B cell (primary cell): ENCODE measurements at regions of chr11 and their contacts with region 1.

Region 1: DNA sequence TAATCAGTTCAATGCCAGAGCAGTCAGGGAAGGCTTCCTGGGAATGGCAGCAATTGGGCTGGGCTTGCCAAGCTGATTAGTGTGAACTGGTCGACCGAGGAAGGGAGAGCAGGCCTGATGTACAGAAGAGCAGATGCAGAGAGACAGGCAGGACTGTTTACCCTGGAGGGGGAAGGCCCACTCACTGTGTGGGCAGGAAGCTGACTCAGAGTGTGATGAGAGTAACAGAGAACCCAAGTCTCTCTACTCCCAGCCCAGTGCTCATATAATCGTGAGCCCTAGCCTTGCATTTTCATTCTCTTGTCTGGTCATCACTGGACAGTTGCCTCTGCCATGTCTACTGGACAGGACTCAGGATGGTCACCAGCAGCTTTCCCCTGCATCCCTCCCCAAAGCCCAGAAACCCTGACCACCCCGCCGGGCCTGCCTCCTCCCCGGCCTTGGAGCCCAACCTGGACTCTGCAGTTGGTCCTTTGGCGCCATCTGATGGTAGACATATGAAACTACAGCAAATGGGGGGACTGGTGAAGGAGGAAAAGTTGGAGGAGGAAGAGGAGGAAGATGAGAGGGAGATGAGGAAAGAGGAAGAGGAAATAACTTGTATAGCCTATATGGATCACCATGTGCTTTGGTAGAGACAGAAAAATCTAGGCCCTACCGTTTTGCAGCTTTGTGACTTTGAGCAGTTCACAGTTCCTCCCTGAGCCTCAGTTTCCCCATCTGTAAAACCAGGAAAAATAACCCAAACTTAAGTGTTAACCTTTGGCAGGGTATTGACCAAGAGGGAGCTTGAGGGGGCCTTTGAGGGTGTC is 43.4 kb upstream of the PRDM11 start:
- DNase-seq: peak; percentile 82
- ATAC-seq: peak; percentile 95
- H3K4me3 ChIP-seq: peak overlapping the region in 1 of 5 experiments; percentile 18
- H3K4me3 Mint-ChIP-seq: peak overlapping the region; percentile 83
- H3K27ac ChIP-seq: no peak overlapping the region
- H3K27ac Mint-ChIP-seq: peak overlapping the region; percentile 80
- H3K4me1 ChIP-seq: peaks cover 13 to 21% of the 10 kb centered on the region in 2 donors
- H3K4me1 Mint-ChIP-seq: peaks cover 17% of the 10 kb centered on the region
- H3K27me3 ChIP-seq: peaks cover 0 to 8% (median 3%) of the 10 kb centered on the region in 4 experiments
- H3K27me3 Mint-ChIP-seq: peaks cover 13% of the 10 kb centered on the region
- CTCF ChIP-seq: peak; percentile 98

Region 2: GRCh38 chr11:44727373-44728287 is 375.4 kb before region 1 on chr11:
- CTCF ChIA-PET with region 1: interaction called, 4 read pairs
- POLR2A ChIA-PET with region 1: no interaction called
- intact Hi-C with region 1: loop called (anchors 2 kb)
- DNase-seq: peak; percentile 78
- ATAC-seq: peak; percentile 74
- H3K4me3 ChIP-seq: peak overlapping the region in 4 of 5 experiments; percentile 65 to 84 (median 66)
- H3K4me3 Mint-ChIP-seq: peak overlapping the region; percentile 88
- H3K27ac ChIP-seq: peak overlapping the region in 1 of 2 donors; percentile 15
- H3K27ac Mint-ChIP-seq: peak overlapping the region; percentile 80
- H3K4me1 ChIP-seq: peaks cover 14 to 18% of the 10 kb centered on the region in 2 donors
- H3K4me1 Mint-ChIP-seq: peaks cover 19% of the 10 kb centered on the region
- H3K27me3 ChIP-seq: peaks cover 0 to 19% (median 10%) of the 10 kb centered on the region in 4 experiments
- H3K27me3 Mint-ChIP-seq: peaks cover 21% of the 10 kb centered on the region
- CTCF ChIP-seq: peak; percentile 98

Region 3: GRCh38 chr11:44927174-44927661 is 175.8 kb before region 1 on chr11:
- CTCF ChIA-PET with region 1: interaction called, 1,701 read pairs
- POLR2A ChIA-PET with region 1: interaction called, 18 read pairs
- intact Hi-C with region 1: loop called (anchors 1 kb)
- DNase-seq: peak; percentile 75
- ATAC-seq: peak; percentile 62
- H3K4me3 ChIP-seq: no peak overlapping the region
- H3K4me3 Mint-ChIP-seq: no peak overlapping the region
- H3K27ac ChIP-seq: no peak overlapping the region
- H3K27ac Mint-ChIP-seq: no peak overlapping the region
- H3K4me1 ChIP-seq: peaks cover 0 to 6% of the 10 kb centered on the region in 2 donors
- H3K4me1 Mint-ChIP-seq: no peaks in the 10 kb centered on the region
- H3K27me3 ChIP-seq: no peaks in the 10 kb centered on the region
- H3K27me3 Mint-ChIP-seq: no peaks in the 10 kb centered on the region
- CTCF ChIP-seq: peak; percentile 93

Region 4: GRCh38 chr11:44960200-44960845 is 142.7 kb before region 1 on chr11:
- CTCF ChIA-PET with region 1: interaction called, 12 read pairs
- POLR2A ChIA-PET with region 1: no interaction called
- intact Hi-C with region 1: no loop called
- DNase-seq: no peak
- ATAC-seq: no peak
- H3K4me3 ChIP-seq: no peak overlapping the region
- H3K4me3 Mint-ChIP-seq: no peak overlapping the region
- H3K27ac ChIP-seq: no peak overlapping the region
- H3K27ac Mint-ChIP-seq: no peak overlapping the region
- H3K4me1 ChIP-seq: no peaks in the 10 kb centered on the region
- H3K4me1 Mint-ChIP-seq: peaks cover 3% of the 10 kb centered on the region
- H3K27me3 ChIP-seq: no peaks in the 10 kb centered on the region
- H3K27me3 Mint-ChIP-seq: peaks cover 3% of the 10 kb centered on the region
- CTCF ChIP-seq: no peak

Region 5: GRCh38 chr11:45031912-45032519 is 71.0 kb before region 1 on chr11:
- CTCF ChIA-PET with region 1: interaction called, 84 read pairs
- POLR2A ChIA-PET with region 1: interaction called, 4 read pairs
- intact Hi-C with region 1: loop called (anchors 1 kb)
- DNase-seq: peak; percentile 89
- ATAC-seq: peak; percentile 46
- H3K4me3 ChIP-seq: no peak overlapping the region
- H3K4me3 Mint-ChIP-seq: peak overlapping the region; percentile 59
- H3K27ac ChIP-seq: peak overlapping the region; percentile 54 to 61
- H3K27ac Mint-ChIP-seq: peak overlapping the region; percentile 80
- H3K4me1 ChIP-seq: peaks cover 35 to 50% of the 10 kb centered on the region in 2 donors
- H3K4me1 Mint-ChIP-seq: peaks cover 61% of the 10 kb centered on the region
- H3K27me3 ChIP-seq: no peaks in the 10 kb centered on the region
- H3K27me3 Mint-ChIP-seq: no peaks in the 10 kb centered on the region
- CTCF ChIP-seq: no peak

Region 6: DNA sequence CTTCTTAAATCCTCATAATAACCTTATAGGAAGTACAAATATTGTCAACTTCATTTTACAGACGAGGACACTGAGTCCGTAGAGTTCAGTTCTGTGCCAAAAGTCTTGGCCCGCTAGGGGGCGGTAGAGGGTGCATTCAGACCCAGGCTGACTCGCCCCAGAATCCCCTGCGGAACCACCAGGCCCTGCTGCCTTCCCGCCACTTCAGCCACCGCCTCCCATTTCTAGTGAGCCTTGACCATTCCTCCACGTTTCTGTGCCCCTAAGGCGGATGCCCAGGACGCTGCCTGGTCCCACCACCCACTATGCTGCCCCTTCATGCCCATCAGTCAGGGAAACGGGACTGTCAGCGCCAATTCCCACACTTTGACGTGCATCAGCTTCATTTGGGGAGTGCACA is 164.0 kb after region 1 on chr11:
- CTCF ChIA-PET with region 1: no interaction called
- POLR2A ChIA-PET with region 1: no interaction called
- intact Hi-C with region 1: no loop called
- DNase-seq: no peak
- ATAC-seq: no peak
- H3K4me3 ChIP-seq: no peak overlapping the region
- H3K4me3 Mint-ChIP-seq: no peak overlapping the region
- H3K27ac ChIP-seq: no peak overlapping the region
- H3K27ac Mint-ChIP-seq: no peak overlapping the region
- H3K4me1 ChIP-seq: no peaks in the 10 kb centered on the region
- H3K4me1 Mint-ChIP-seq: no peaks in the 10 kb centered on the region
- H3K27me3 ChIP-seq: peaks cover 0 to 20% (median 4%) of the 10 kb centered on the region in 4 experiments
- H3K27me3 Mint-ChIP-seq: peaks cover 70% of the 10 kb centered on the region
- CTCF ChIP-seq: no peak

Region 7: GRCh38 chr11:45527898-45528297 is 424.9 kb after region 1 on chr11:
- CTCF ChIA-PET with region 1: no interaction called
- POLR2A ChIA-PET with region 1: no interaction called
- intact Hi-C with region 1: no loop called
- DNase-seq: no peak
- ATAC-seq: no peak
- H3K4me3 ChIP-seq: no peak overlapping the region
- H3K4me3 Mint-ChIP-seq: no peak overlapping the region
- H3K27ac ChIP-seq: no peak overlapping the region
- H3K27ac Mint-ChIP-seq: no peak overlapping the region
- H3K4me1 ChIP-seq: no peaks in the 10 kb centered on the region
- H3K4me1 Mint-ChIP-seq: no peaks in the 10 kb centered on the region
- H3K27me3 ChIP-seq: no peaks in the 10 kb centered on the region
- H3K27me3 Mint-ChIP-seq: peaks cover 10% of the 10 kb centered on the region
- CTCF ChIP-seq: no peak